ENCODE measurements at regions of chr1 and their contacts with region 1.

Region 1: DNA sequence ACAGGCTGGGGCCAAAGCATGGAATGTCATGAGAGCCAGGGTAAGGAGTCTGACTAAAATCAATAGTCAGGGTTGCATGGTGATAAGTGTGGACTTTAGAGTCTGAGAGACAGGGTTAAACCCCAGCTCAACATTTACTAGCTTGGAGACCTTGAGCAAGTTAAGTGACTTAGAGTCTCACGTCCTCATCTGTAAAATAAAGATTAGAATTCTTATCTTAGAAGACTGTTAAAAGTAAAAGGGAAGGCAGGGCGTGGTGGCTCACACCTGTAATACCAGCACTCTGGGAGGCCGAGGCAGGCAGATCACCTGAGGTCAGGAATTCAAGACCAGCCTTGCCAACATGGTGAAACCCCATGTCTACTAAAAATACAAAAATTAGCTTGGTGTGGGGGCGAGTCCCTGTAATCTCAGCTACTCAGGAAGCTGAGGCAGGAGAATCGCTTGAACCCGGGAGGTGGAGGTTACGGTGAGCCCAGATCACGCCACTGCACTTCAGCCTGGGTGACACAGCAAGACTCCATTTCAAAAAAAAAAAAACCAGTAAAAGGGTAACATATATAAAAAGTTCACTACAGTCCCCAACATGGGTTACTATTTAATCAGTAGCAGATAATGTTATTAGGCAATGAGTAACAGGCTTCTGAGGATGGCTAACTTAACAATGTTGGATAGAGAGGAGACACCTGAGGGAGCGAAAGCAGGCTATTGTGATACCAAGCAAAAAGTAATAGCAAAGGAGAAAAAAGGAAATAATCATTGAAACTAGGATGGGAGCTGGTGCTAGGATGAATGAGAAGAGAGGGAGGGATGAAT is 20.8 kb downstream of the TMCO1 start:
- DNase-seq: peak; percentile 12 to 46
- H3K4me3 ChIP-seq: no peak overlapping the region
- H3K4me3 Mint-ChIP-seq: no peak overlapping the region
- H3K27ac Mint-ChIP-seq: no peak overlapping the region
- H3K4me1 ChIP-seq: 0 out of 2 replicates have a peak, but pooled peaks cover 10% of the 10 kb centered on the region
- H3K4me1 Mint-ChIP-seq: peaks cover 20% of the 10 kb centered on the region
- H3K27me3 ChIP-seq: no peaks in the 10 kb centered on the region
- H3K27me3 Mint-ChIP-seq: no peaks in the 10 kb centered on the region
- CTCF ChIP-seq: no peak

Region 2: DNA sequence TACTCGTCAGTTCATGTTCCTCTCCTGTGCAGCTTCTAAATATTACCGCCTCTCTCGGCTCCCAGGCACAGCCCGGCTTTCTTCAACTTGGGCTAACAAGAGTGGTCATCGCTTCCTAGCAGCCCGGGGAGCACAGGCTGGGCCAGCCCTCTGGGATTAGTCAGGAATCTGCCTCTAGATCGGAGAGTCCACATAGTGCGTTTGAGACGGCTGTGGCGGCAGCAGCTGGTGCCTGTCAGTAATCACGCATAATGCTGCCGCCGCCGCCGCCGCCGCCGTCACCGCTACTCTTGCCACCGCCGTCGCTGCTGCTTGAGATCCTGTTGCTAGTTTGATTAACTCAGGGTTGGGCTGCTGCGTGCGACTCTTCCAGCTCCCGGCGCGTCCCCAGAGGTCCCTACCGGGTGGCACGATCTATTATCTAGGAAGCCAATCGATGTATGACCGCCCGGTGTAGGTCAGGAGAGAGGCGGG is 302.9 kb before region 1 on chr1 and contains the start of gene RXRG:
- CTCF ChIA-PET with region 1: no interaction called
- POLR2A ChIA-PET with region 1: no interaction called
- intact Hi-C with region 1: no loop called
- DNase-seq: no peak
- H3K4me3 ChIP-seq: no peak within 1 kb of the TSS
- H3K4me3 Mint-ChIP-seq: no peak within 1 kb of the TSS
- H3K27ac Mint-ChIP-seq: no peak within 1 kb of the TSS
- H3K4me1 ChIP-seq: no peaks in the 10 kb centered on the region
- H3K4me1 Mint-ChIP-seq: no peaks in the 10 kb centered on the region
- H3K27me3 ChIP-seq: no peaks in the 10 kb centered on the region
- H3K27me3 Mint-ChIP-seq: peaks cover 15% of the 10 kb centered on the region
- CTCF ChIP-seq: no peak
- total RNA-seq, gene RXRG: not detected in 2 replicates

Region 3: DNA sequence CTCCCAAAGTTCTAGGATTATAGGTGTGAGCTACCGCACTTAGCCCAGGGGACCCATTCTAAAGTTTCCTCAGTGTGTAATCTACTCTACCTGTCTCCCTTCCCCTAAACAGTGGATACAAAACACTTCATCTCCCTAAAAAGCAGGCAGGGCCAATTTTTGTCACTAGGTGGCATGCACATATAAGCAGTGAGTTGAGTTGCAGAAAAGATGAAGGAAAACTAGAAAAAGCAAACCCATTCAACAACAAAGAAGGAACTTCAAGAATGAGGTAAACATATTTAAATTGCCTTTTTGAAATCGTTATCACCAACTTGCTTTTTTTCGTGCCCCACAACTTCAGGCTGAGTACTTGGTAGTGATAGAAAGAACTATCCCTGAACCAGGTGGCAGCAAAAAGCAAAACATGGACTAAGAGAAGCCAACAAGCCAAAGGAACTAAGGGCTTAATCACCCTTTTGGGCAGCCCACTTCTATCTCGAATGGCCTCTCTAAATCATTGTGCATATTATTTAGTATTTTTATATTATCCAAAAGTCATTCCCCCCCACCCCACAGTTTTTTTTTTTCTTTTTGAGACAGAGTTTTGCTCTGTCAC is 29.8 kb before region 1 on chr1:
- CTCF ChIA-PET with region 1: no interaction called
- POLR2A ChIA-PET with region 1: no interaction called
- intact Hi-C with region 1: loop called (anchors 2 kb)
- DNase-seq: peak; percentile 57 to 65
- H3K4me3 ChIP-seq: no peak overlapping the region
- H3K4me3 Mint-ChIP-seq: no peak overlapping the region
- H3K27ac Mint-ChIP-seq: no peak overlapping the region
- H3K4me1 ChIP-seq: no peaks in the 10 kb centered on the region
- H3K4me1 Mint-ChIP-seq: no peaks in the 10 kb centered on the region
- H3K27me3 ChIP-seq: no peaks in the 10 kb centered on the region; the same call in 1 of the 2 replicates
- H3K27me3 Mint-ChIP-seq: no peaks in the 10 kb centered on the region
- CTCF ChIP-seq: peak; percentile 56 to 88

Measured in Caco-2 (cell line).